Aorta (tissue), 5 donors: ENCODE measurements at regions of chr1 and their contacts with region 1.

Region 1: DNA sequence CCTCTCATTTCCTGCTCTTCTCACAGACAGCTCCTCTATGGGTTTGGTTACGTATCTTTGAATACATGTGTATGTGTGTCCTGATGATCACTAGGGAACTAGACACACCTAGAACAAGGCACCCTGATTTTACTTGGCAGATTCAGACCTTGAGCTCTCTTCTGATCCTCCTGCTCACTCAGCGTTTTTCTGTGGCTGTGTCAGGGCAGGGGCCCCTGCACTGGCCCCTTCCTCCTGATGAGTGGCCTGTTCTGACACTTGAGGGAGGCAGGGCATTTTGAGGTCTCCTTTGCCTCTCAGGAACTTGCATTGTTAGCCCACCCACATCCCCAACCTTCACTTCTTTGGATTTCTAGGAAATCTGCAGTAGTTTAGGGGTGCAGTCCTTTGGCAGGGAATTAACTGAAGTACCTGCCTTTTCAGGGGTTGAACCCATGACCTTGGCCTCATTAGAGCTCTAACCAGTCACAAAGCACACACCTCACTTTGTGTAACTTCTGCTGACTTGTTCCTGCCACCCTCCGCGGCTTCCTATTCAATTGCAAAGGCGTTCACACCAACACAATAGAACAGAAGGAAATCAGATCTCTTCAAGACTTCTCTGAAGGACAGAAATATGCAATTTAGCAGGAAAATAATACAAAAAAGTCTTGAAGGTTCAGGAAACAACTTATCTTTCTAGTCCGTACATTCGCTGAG is 8.8 kb downstream of the SMYD2 start:
- DNase-seq: no peak
- ATAC-seq: no peak
- H3K4me3 ChIP-seq: no peak overlapping the region
- H3K27ac ChIP-seq: no peak overlapping the region
- H3K4me1 ChIP-seq: no peaks in the 10 kb centered on the region
- H3K27me3 ChIP-seq: no peaks in the 10 kb centered on the region

Region 2: GRCh38 chr1:214271174-214271858 is 18.4 kb before region 1 on chr1:
- intact Hi-C with region 1: loop called in 1 of 2 experiments (anchors 1 kb)
- DNase-seq: no peak
- ATAC-seq: no peak
- H3K4me3 ChIP-seq: no peak overlapping the region
- H3K27ac ChIP-seq: no peak overlapping the region
- H3K4me1 ChIP-seq: no peaks in the 10 kb centered on the region
- H3K27me3 ChIP-seq: no peaks in the 10 kb centered on the region